Caco-2 (cell line): ENCODE measurements at regions of chr9 and their contacts with region 1.

Region 1: DNA sequence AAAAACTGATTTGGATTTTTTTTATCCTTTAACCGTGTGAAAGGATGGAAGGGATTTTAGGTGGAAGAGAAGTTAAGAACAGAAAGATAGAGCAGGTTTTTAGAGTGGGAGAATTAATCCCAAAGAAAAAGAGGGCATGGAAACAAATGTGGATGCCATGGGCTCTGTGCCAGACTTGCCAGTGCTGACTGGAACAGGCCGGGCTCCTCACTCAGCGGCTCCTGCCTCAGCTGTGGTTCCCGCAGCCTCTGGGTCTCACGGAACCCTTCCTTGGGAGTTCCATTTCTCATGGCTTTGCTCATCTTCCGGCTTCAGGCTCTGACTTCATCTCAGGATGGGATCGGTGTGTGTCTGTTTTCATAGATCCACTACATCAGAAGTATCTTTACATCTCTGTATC is 30.4 kb upstream of the SLC2A8 start:
- DNase-seq: no peak
- H3K4me3 ChIP-seq: no peak overlapping the region
- H3K4me3 Mint-ChIP-seq: no peak overlapping the region
- H3K27ac Mint-ChIP-seq: no peak overlapping the region
- H3K4me1 ChIP-seq: peaks cover 18% of the 10 kb centered on the region
- H3K4me1 Mint-ChIP-seq: peaks cover 34% of the 10 kb centered on the region
- H3K27me3 ChIP-seq: no peaks in the 10 kb centered on the region
- H3K27me3 Mint-ChIP-seq: no peaks in the 10 kb centered on the region
- CTCF ChIP-seq: no peak

Region 2: DNA sequence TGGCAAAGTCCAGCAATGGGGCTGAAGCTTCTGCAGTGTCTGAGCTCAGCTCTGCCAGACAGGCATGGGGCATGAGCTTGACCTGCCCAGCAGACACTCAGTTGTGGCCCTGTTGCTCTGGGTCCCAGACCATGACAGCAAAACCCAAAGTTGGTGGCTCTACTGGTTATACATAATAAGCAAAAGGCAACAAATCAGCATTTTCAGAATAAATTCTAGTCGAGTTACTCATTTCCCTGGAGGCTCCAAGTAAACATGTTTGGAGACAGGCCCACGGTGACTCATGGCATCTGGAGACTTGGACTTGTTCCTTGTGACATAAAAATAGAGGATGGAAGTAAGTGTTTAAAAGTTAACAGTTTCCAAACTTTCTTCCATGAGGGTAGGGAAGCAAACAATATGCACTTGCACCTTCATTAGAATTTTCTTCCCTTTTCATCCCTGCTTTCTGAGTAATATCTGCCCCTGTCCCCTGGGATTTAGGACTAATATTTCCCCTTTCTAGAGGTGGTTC is 29.8 kb before region 1 on chr9:
- CTCF ChIA-PET with region 1: no interaction called
- POLR2A ChIA-PET with region 1: no interaction called
- intact Hi-C with region 1: loop called (anchors 1 kb)
- DNase-seq: peak in 1 of 2 experiments; percentile 19
- H3K4me3 ChIP-seq: no peak overlapping the region
- H3K4me3 Mint-ChIP-seq: no peak overlapping the region
- H3K27ac Mint-ChIP-seq: no peak overlapping the region
- H3K4me1 ChIP-seq: peaks cover 10% of the 10 kb centered on the region
- H3K4me1 Mint-ChIP-seq: no peaks in the 10 kb centered on the region
- H3K27me3 ChIP-seq: no peaks in the 10 kb centered on the region
- H3K27me3 Mint-ChIP-seq: no peaks in the 10 kb centered on the region
- CTCF ChIP-seq: no peak

Region 3: GRCh38 chr9:127388037-127388855 is 21.7 kb after region 1 on chr9:
- CTCF ChIA-PET with region 1: interaction called, 7 read pairs
- POLR2A ChIA-PET with region 1: interaction called, 10 read pairs
- intact Hi-C with region 1: loop called (anchors 1 kb)
- DNase-seq: peak; percentile 91 to 95
- H3K4me3 ChIP-seq: no peak overlapping the region
- H3K4me3 Mint-ChIP-seq: peak overlapping the region; percentile 61
- H3K27ac Mint-ChIP-seq: peak overlapping the region; percentile 97
- H3K4me1 ChIP-seq: peaks cover 67% of the 10 kb centered on the region
- H3K4me1 Mint-ChIP-seq: peaks cover 73% of the 10 kb centered on the region
- H3K27me3 ChIP-seq: no peaks in the 10 kb centered on the region
- H3K27me3 Mint-ChIP-seq: no peaks in the 10 kb centered on the region
- CTCF ChIP-seq: no peak

Region 4: GRCh38 chr9:127406799-127407509 is 40.4 kb after region 1 on chr9:
- CTCF ChIA-PET with region 1: no interaction called
- POLR2A ChIA-PET with region 1: interaction called, 12 read pairs
- intact Hi-C with region 1: loop called (anchors 2 kb)
- DNase-seq: no peak
- H3K4me3 ChIP-seq: no peak overlapping the region
- H3K4me3 Mint-ChIP-seq: no peak overlapping the region
- H3K27ac Mint-ChIP-seq: peak overlapping the region; percentile 76
- H3K4me1 ChIP-seq: no peaks in the 10 kb centered on the region
- H3K4me1 Mint-ChIP-seq: peaks cover 9% of the 10 kb centered on the region
- H3K27me3 ChIP-seq: no peaks in the 10 kb centered on the region
- H3K27me3 Mint-ChIP-seq: no peaks in the 10 kb centered on the region
- CTCF ChIP-seq: no peak